A549 (cell line): ENCODE measurements at regions of chr1 and their contacts with region 1.

Region 1: GRCh38 chr1:201877877-201878401 is 10.8 kb upstream of the SHISA4 start:
- DNase-seq: peak; percentile 57 to 58
- ATAC-seq: peak; percentile 68 to 70; a peak in 4 of 6 replicates
- H3K4me3 ChIP-seq: no peak overlapping the region
- H3K27ac ChIP-seq: no peak overlapping the region
- H3K4me1 ChIP-seq: peaks cover 8% of the 10 kb centered on the region
- CTCF ChIP-seq: peak; percentile 63
- EP300 ChIP-seq: no peak
- POLR2A ChIP-seq: no peak
- RAD21 ChIP-seq: peak; percentile 53

Region 2: GRCh38 chr1:201582705-201583442 is 295.1 kb before region 1 on chr1:
- CTCF ChIA-PET with region 1: no interaction called
- POLR2A ChIA-PET with region 1: no interaction called
- DNase-seq: no peak
- ATAC-seq: peak; percentile 45 to 51; a peak in 3 of 6 replicates
- H3K4me3 ChIP-seq: no peak overlapping the region
- H3K27ac ChIP-seq: peak overlapping the region; percentile 23 to 73; a peak in 4 of 6 replicates
- H3K4me1 ChIP-seq: peaks cover 37% of the 10 kb centered on the region
- CTCF ChIP-seq: no peak
- EP300 ChIP-seq: no peak
- POLR2A ChIP-seq: no peak
- RAD21 ChIP-seq: no peak

Region 3: DNA sequence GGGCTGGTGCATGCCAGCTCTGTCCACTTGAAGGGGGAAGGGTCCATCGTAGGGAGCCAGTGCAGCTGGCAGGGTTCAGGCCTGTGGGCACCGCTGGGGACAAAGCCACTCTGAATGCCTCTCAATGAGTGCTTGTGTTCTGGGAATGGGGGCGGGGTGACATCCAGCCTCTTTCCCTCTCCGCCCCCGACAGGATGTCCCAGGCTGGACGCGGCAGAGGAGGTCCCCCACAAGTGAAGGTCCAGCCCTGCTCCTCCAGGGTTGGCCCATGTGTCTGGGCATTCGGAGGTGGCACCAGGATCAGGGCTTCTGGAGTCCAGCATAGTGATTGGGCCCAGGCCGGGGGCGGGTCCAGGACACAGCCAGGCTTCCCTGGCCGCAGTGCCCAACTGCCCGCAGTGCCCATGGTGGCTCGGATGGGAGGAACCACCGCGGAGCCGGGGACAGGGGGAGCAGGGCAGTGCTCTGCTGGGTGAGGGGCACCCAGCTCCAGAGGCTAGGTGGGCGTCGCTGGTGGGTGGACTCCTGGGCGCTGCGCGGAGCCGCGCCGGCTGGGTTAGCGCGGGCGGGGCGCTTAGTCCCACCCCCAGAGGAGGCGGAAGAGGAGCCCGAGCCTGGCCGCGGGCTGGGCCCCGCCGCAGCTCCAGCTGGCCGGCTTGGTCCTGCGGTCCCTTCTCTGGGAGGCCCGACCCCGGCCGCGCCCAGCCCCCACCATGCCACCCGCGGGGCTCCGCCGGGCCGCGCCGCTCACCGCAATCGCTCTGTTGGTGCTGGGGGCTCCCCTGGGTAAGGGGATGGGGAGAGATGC is 10.5 kb after region 1 on chr1 and contains the start of gene SHISA4:
- CTCF ChIA-PET with region 1: interaction called, 245 read pairs
- POLR2A ChIA-PET with region 1: interaction called, 3 read pairs
- DNase-seq: peak; percentile 75 to 86
- ATAC-seq: peak; percentile 86 to 93
- H3K4me3 ChIP-seq: peak within 1 kb of the TSS; percentile 67
- H3K27ac ChIP-seq: peak within 1 kb of the TSS; percentile 81 to 94
- H3K4me1 ChIP-seq: peaks cover 36% of the 10 kb centered on the region
- CTCF ChIP-seq: no peak
- EP300 ChIP-seq: no peak
- POLR2A ChIP-seq: peak; percentile 79
- RAD21 ChIP-seq: no peak
- polyA plus RNA-seq, gene SHISA4: 10.0 and 13.8 TPM in 2 replicates

Region 4: DNA sequence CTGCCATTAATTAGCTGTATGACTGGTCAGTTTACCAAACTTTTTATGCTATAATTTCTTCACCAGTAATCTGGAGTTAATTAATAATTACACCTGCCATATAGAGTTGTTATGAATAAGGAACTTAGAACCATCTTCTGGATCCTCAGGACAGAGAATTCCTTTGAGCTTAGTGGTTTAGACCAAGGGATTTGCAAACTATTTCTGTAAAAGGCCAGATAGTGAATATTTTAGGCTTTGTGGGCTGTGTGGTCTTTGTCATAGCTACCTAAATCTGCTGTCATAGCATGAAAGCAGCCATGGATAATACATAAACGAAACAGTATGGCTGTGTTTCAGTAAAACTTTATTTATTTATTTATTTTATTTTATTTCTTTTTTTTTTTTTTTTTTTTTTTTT is 86.3 kb after region 1 on chr1:
- CTCF ChIA-PET with region 1: interaction called, 10 read pairs
- POLR2A ChIA-PET with region 1: no interaction called
- DNase-seq: no peak
- ATAC-seq: no peak
- H3K4me3 ChIP-seq: no peak overlapping the region
- H3K27ac ChIP-seq: no peak overlapping the region
- H3K4me1 ChIP-seq: no peaks in the 10 kb centered on the region
- CTCF ChIP-seq: no peak
- EP300 ChIP-seq: no peak
- POLR2A ChIP-seq: no peak
- RAD21 ChIP-seq: no peak